ENCODE measurements at regions of chr2 and their contacts with region 1.

Region 1: GRCh38 chr2:64998658-64999061 is 9.5 kb downstream of the SLC1A4 start:
- DNase-seq: no peak
- ATAC-seq: peak; percentile 15 to 28 (median 26)
- H3K4me3 ChIP-seq: peak overlapping the region; percentile 3
- H3K27ac ChIP-seq: peak overlapping the region; percentile 69
- H3K4me1 ChIP-seq: peaks cover 41% of the 10 kb centered on the region
- H3K27me3 ChIP-seq: no peaks in the 10 kb centered on the region
- CTCF ChIP-seq: no peak

Region 2: DNA sequence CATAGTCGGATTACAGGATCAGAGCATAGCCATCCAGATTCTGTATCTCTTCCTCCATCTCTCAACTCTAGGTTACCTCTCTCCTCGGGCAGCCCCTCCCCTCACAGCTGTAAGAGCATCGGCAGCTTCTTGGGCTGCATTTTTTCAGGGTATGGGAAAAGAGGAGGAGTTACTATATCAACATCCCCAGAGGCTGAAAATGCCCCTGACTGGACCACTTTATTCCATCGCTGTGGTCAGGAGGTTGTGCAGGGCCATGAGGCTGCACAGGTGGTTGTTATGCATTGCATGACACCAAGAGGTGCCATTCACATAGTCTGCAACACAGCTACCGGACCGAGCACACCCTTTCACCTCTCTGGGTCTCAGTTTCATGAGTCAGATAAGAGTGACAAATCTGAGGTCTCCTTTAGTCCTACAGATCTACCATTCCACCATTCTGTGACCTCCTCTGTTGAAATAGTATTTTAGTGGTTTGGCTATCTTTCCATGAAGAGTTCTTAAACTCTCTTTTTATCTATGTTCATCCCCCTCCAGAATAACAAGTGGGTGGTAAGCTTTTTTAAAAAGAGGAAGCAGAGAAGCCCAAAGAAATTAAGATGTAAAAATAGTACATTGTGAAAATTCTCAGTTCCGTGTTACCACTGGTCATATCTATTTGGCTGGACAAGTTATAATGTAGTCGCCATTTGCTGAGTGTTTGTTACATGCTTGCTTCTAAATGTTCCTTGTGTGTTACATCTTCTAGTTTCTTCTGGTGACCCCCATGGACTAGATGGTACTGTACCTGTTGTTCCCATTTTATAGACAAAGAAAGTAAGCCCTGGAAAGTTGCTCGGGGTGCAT is 66.1 kb before region 1 on chr2:
- intact Hi-C with region 1: no loop called
- DNase-seq: no peak
- ATAC-seq: peak in 3 of 4 donors; percentile 30 to 55 (median 35)
- H3K4me3 ChIP-seq: no peak overlapping the region
- H3K27ac ChIP-seq: peak overlapping the region; percentile 39
- H3K4me1 ChIP-seq: peaks cover 20% of the 10 kb centered on the region
- H3K27me3 ChIP-seq: no peaks in the 10 kb centered on the region
- CTCF ChIP-seq: no peak

Region 3: DNA sequence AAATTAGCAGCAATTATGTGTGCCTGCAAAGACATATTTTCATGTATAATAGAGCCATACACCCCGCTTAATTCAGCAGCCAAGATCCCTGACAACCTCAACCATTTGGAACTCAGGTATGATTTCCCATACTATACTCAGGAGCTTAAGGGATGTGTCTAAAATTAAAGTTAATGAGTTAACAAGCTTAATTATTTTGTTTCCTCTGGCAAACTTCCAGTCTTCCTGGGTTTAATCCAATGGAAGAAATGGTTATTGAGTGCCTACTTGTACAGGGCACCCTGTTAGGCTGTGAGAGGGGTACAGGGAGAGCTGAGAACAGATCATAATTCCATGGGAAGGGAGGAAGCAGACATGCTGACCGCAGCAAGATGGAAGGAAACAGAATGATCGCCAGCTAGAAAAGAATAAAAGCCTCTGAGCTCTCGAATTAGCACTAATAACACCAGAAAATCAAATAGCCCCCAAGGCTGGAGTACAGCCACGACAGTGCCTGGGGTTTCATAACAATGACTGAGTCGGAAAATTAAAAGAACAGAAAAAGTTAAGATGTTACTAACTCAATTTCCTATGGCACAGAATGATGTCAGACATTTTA is 36.8 kb after region 1 on chr2:
- intact Hi-C with region 1: loop called in 1 of 2 experiments (anchors 5 kb)
- DNase-seq: no peak
- ATAC-seq: no peak
- H3K4me3 ChIP-seq: no peak overlapping the region
- H3K27ac ChIP-seq: no peak overlapping the region
- H3K4me1 ChIP-seq: peaks cover 13% of the 10 kb centered on the region
- H3K27me3 ChIP-seq: no peaks in the 10 kb centered on the region
- CTCF ChIP-seq: no peak

Region 4: GRCh38 chr2:65116645-65117044 is 118.0 kb after region 1 on chr2:
- intact Hi-C with region 1: no loop called
- DNase-seq: no peak
- ATAC-seq: no peak
- H3K4me3 ChIP-seq: no peak overlapping the region
- H3K27ac ChIP-seq: no peak overlapping the region
- H3K4me1 ChIP-seq: peaks cover 26% of the 10 kb centered on the region
- H3K27me3 ChIP-seq: no peaks in the 10 kb centered on the region
- CTCF ChIP-seq: no peak